Psoas muscle (tissue), 8 donors: ENCODE measurements at regions of chr16 and their contacts with region 1.

Region 1: GRCh38 chr16:78976212-78976611 is 624.3 kb downstream of the MAF start:
- DNase-seq: no peak
- ATAC-seq: no peak
- H3K4me3 ChIP-seq: no peak overlapping the region
- H3K27ac ChIP-seq: no peak overlapping the region
- H3K4me1 ChIP-seq: no peaks in the 10 kb centered on the region
- H3K27me3 ChIP-seq: no peaks in the 10 kb centered on the region
- CTCF ChIP-seq: no peak

Region 2: DNA sequence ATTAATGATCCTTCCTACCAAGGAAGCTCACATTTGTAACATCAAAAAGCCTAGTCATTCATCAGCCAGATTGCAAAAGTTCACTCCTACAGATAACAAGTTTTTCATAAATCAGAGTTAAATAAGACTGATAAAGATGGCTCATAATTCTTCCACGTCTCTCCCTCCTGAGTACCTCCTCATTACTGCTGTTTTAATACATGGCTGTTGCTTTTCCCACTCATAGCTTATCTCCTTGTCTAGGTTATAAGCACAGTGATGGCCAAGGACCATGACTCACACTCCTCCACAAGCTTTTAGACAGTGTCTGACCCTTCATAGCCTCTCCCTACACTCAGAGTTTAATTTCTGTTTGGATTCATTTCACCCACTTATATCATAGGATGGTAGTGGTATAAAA is 1886.2 kb before region 1 on chr16:
- intact Hi-C with region 1: no loop called
- DNase-seq: no peak
- ATAC-seq: no peak
- H3K4me3 ChIP-seq: no peak overlapping the region
- H3K27ac ChIP-seq: no peak overlapping the region
- H3K4me1 ChIP-seq: no peaks in the 10 kb centered on the region
- H3K27me3 ChIP-seq: no peaks in the 10 kb centered on the region
- CTCF ChIP-seq: no peak

Region 3: DNA sequence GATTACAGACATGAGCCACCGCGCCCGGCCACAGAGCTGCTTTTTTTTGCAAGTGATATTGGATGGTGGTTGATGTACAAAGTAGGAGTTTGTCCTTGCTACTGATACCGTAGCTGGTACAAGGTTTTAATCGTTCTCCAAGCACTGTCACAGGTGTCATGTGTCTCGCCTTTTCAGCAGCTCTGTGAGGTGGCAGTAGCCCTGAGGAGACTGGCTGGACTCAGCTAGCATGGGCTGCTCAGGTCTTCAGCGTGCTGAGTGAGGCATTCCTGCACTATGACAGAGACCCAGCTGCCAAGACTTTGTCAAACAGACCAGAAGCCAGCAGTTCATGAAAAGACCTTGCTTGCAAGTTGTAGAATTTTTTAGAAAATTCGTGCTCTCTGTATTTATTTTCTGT is 869.5 kb before region 1 on chr16:
- intact Hi-C with region 1: loop called in 1 of 2 experiments (anchors 5 kb)
- DNase-seq: no peak
- ATAC-seq: peak in 2 of 4 donors; percentile 46 to 73
- H3K4me3 ChIP-seq: no peak overlapping the region
- H3K27ac ChIP-seq: no peak overlapping the region
- H3K4me1 ChIP-seq: no peaks in the 10 kb centered on the region
- H3K27me3 ChIP-seq: no peaks in the 10 kb centered on the region
- CTCF ChIP-seq: no peak

Region 4: DNA sequence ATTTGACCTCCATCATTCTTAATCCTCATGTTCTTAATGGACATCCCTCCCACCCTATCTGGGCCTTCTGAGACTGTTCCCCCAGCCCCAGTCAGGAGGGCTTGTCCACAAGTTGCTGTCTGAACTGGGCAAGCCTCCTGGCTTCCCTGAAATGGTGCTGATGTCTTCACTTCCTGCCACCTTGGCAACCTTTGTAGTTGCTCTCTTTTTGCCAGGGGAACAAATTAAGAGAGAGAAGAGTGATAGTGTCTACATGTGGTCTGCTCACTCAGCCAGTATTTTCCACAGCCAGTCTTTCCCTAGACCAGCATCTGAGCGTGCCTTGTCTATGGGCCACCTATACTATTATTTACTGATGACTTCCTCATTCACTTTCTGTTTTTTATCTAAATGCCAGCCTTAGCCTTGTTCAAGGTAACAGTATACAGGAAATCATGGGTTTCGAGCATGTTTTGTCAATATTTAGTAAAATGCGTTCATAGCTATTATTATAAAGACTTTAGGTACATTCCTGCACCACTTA is 85.8 kb before region 1 on chr16:
- intact Hi-C with region 1: no loop called
- DNase-seq: no peak
- ATAC-seq: no peak
- H3K4me3 ChIP-seq: no peak overlapping the region
- H3K27ac ChIP-seq: no peak overlapping the region
- H3K4me1 ChIP-seq: no peaks in the 10 kb centered on the region
- H3K27me3 ChIP-seq: no peaks in the 10 kb centered on the region
- CTCF ChIP-seq: no peak